ENCODE measurements at regions of chr4 and their contacts with region 1.

Region 1: DNA sequence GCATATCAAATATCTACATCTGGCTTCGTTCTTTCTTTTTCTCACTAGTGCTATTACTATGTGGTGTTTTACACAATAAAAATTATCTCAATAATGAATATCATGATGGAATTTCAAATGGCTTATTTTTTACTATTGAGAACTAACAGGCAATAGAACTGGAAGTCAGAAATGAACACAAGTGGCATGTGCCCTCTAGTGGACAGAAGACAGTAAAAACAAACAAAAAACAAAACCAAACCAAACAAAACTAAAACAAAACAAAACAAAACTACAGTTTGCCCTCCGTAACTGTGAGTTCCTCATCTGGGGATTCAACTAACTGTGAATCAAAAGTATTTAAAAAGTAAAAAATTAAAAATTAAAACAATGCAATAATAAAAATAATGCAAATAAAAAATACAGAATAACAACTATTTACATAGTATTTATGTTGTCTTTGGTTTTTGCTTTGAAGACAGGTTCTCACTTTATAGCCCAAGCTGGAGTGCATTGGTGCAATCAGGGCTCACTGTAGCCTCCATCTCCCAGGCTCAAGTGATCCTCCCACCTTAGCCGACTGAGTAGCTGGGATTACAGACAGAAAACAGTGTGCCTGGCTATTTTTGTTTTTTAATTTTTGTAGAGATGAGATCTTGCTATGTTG is 195.6 kb upstream of the TACR3 start:
- DNase-seq: peak; percentile 49
- H3K4me3 Mint-ChIP-seq: no peak overlapping the region
- H3K27ac Mint-ChIP-seq: peak overlapping the region; percentile 19
- H3K4me1 Mint-ChIP-seq: no peaks in the 10 kb centered on the region
- H3K27me3 Mint-ChIP-seq: no peaks in the 10 kb centered on the region
- CTCF ChIP-seq: peak; percentile 44

Region 2: GRCh38 chr4:103204111-103204510 is 711.2 kb before region 1 on chr4:
- CTCF ChIA-PET with region 1: interaction called, 8 read pairs
- POLR2A ChIA-PET with region 1: no interaction called
- intact Hi-C with region 1: loop called (anchors 1 kb)
- DNase-seq: peak; percentile 46
- H3K4me3 Mint-ChIP-seq: no peak overlapping the region
- H3K27ac Mint-ChIP-seq: no peak overlapping the region
- H3K4me1 Mint-ChIP-seq: no peaks in the 10 kb centered on the region
- H3K27me3 Mint-ChIP-seq: no peaks in the 10 kb centered on the region
- CTCF ChIP-seq: peak; percentile 49

Region 3: GRCh38 chr4:103634236-103634635 is 281.1 kb before region 1 on chr4:
- CTCF ChIA-PET with region 1: interaction called, 24 read pairs
- POLR2A ChIA-PET with region 1: no interaction called
- intact Hi-C with region 1: loop called (anchors 1 kb)
- DNase-seq: peak; percentile 25
- H3K4me3 Mint-ChIP-seq: no peak overlapping the region
- H3K27ac Mint-ChIP-seq: no peak overlapping the region
- H3K4me1 Mint-ChIP-seq: no peaks in the 10 kb centered on the region
- H3K27me3 Mint-ChIP-seq: no peaks in the 10 kb centered on the region
- CTCF ChIP-seq: peak; percentile 22

Region 4: DNA sequence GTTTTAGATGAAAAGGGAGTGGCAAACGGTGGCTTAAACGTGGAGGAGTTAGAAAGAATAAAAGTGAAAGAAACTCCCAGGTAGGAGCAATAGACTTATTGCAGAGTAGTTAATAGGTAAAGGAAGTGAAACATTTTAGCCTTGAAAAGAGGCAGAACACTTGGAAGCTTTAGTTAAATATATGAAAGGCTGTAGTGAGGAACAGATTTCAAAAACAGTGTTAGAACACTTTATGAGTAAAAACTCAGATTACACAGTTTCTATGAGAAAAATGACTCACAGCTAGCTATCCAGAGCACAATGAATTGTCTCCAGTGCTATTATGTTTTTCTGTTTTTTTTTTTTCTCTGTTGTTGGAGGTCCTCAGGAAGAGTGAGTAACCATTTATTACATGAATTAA is 241.4 kb before region 1 on chr4:
- CTCF ChIA-PET with region 1: no interaction called
- POLR2A ChIA-PET with region 1: no interaction called
- intact Hi-C with region 1: no loop called
- DNase-seq: no peak
- H3K4me3 Mint-ChIP-seq: no peak overlapping the region
- H3K27ac Mint-ChIP-seq: no peak overlapping the region
- H3K4me1 Mint-ChIP-seq: peaks cover 5% of the 10 kb centered on the region
- H3K27me3 Mint-ChIP-seq: no peaks in the 10 kb centered on the region
- CTCF ChIP-seq: no peak

Region 5: GRCh38 chr4:103786014-103786413 is 129.3 kb before region 1 on chr4:
- CTCF ChIA-PET with region 1: interaction called, 15 read pairs
- POLR2A ChIA-PET with region 1: no interaction called
- intact Hi-C with region 1: loop called (anchors 5 kb)
- DNase-seq: peak; percentile 64
- H3K4me3 Mint-ChIP-seq: no peak overlapping the region
- H3K27ac Mint-ChIP-seq: no peak overlapping the region
- H3K4me1 Mint-ChIP-seq: no peaks in the 10 kb centered on the region
- H3K27me3 Mint-ChIP-seq: no peaks in the 10 kb centered on the region
- CTCF ChIP-seq: peak; percentile 58

Region 6: DNA sequence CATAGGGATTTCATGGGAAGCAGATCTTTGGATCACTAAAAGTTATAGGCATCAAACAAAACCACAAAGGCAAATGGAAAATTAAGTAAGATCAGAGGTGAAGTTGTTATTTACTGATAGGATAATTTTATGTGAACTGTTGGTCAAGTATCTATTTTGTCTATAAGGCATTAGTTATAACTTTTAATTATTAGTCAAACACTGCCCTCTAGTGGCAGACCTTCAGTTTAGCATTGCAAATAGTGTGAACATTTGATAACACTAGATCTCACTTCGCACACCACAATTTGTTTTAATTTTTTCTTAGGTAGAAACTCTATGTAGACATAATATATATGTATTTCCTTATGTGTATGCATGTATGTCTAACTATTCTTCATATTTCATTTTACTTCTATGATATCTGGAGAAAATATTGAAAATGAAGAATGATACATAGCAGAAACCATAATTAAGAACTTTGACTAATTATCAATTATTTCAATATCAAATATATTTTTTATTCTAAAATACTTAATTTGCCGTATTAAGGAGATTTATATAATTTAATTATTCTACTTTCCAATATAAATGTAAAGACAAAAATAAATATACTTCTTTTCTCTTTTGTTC is 18.9 kb after region 1 on chr4:
- CTCF ChIA-PET with region 1: interaction called, 14 read pairs
- POLR2A ChIA-PET with region 1: no interaction called
- intact Hi-C with region 1: no loop called
- DNase-seq: peak; percentile 67
- H3K4me3 Mint-ChIP-seq: no peak overlapping the region
- H3K27ac Mint-ChIP-seq: no peak overlapping the region
- H3K4me1 Mint-ChIP-seq: no peaks in the 10 kb centered on the region
- H3K27me3 Mint-ChIP-seq: no peaks in the 10 kb centered on the region
- CTCF ChIP-seq: peak; percentile 73

Measured in MCF 10A (cell line).